Head of caudate nucleus (tissue), 42 donors: ENCODE measurements at regions of chr1 and their contacts with region 1.

Region 1: GRCh38 chr1:29235955-29236684 is at the start of gene PTPRU:
- DNase-seq: peak in 41 of 42 donors; percentile 34 to 93 (median 83)

Region 2: GRCh38 chr1:30379684-30380624 is 1143.8 kb after region 1 on chr1:
- intact Hi-C with region 1: loop called (anchors 5 kb)
- DNase-seq: peak in 39 of 42 donors; percentile 8 to 87 (median 61)

Region 3: GRCh38 chr1:30707412-30708360 is 1471.6 kb after region 1 on chr1:
- intact Hi-C with region 1: loop called (anchors 5 kb)
- DNase-seq: peak; percentile 74 to 95 (median 87)